ENCODE measurements at regions of chr15 and their contacts with region 1.

Region 1: GRCh38 chr15:65869127-65869953 is at the start of gene RAB11A:
- DNase-seq: peak; percentile 92 to 98 (median 93)
- ATAC-seq: peak; percentile 91 to 92
- H3K4me3 Mint-ChIP-seq: peak within 1 kb of the TSS; percentile 93 to 100 (median 99)
- H3K27ac Mint-ChIP-seq: peak within 1 kb of the TSS; percentile 93 to 100 (median 99)
- H3K4me1 Mint-ChIP-seq: peaks cover 26 to 38% (median 33%) of the 10 kb centered on the region in 4 donors
- H3K27me3 Mint-ChIP-seq: peaks cover 0 to 4% (median 0%) of the 10 kb centered on the region in 5 donors
- polyA plus RNA-seq, gene RAB11A: 186 to 204 (median 186) TPM

Region 2: DNA sequence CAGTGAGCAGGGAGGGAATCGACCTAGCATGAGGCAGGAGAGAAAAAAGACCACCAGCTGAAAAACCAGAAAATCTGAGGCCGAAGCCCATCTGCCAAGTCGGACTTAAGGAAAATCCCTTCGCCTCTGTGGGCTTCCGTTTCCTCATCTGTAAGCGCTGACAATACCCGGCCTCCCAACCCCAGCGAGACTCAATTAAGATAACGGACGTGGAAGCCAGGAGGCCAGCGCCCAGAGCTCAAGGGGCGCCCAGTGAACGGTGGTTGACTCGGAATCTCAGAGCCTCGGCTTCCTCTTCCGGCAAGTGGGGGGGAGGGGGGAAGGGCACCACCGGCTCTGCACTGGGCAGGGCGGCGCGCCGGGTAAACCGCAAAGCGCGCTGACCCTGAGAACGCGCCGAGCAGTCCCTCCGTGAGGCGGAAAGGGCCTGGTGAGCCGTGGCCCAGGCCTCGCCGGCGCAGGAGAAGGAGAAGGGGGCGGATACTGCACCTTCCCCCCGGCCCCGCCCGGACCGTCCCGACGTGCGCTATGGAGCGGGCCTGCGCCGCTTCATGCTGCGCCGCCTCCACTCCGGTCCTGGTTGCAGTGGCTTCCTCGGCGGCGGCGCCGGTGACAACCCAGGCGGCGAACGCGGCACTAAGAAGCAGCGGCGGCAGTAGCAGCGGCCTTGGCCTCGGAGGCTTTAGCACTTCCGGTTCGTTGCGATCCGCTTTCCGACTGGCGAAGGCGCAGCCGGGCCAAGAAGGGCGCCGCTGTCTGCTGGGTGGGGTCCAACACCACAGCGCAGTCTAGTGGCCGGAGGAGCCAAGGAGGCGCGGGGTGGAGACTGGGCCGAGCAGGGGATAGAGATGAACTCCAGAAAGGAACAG is 352.1 kb before region 1 on chr15 and contains the start of gene DPP8:
- POLR2A ChIA-PET with region 1: interaction called, 10 read pairs
- DNase-seq: peak; percentile 86 to 95 (median 93)
- ATAC-seq: peak; percentile 94
- H3K4me3 Mint-ChIP-seq: peak within 1 kb of the TSS; percentile 86 to 100 (median 95)
- H3K27ac Mint-ChIP-seq: peak within 1 kb of the TSS; percentile 79 to 99 (median 93)
- H3K4me1 Mint-ChIP-seq: peaks cover 9 to 53% (median 41%) of the 10 kb centered on the region in 4 donors
- H3K27me3 Mint-ChIP-seq: no peaks in the 10 kb centered on the region
- polyA plus RNA-seq, gene DPP8: 38.1 to 47.1 (median 41.8) TPM

Region 3: GRCh38 chr15:65610871-65611718 is 258.2 kb before region 1 on chr15 and contains the start of gene INTS14:
- POLR2A ChIA-PET with region 1: interaction called, 21 read pairs
- DNase-seq: peak; percentile 83 to 91 (median 86)
- ATAC-seq: peak; percentile 95
- H3K4me3 Mint-ChIP-seq: peak within 1 kb of the TSS; percentile 92 to 99 (median 97)
- H3K27ac Mint-ChIP-seq: peak within 1 kb of the TSS; percentile 94 to 100 (median 98)
- H3K4me1 Mint-ChIP-seq: peaks cover 15 to 49% (median 42%) of the 10 kb centered on the region in 4 donors
- H3K27me3 Mint-ChIP-seq: no peaks in the 10 kb centered on the region
- polyA plus RNA-seq, gene INTS14: 20.4 to 30.3 (median 24.0) TPM

Region 4: DNA sequence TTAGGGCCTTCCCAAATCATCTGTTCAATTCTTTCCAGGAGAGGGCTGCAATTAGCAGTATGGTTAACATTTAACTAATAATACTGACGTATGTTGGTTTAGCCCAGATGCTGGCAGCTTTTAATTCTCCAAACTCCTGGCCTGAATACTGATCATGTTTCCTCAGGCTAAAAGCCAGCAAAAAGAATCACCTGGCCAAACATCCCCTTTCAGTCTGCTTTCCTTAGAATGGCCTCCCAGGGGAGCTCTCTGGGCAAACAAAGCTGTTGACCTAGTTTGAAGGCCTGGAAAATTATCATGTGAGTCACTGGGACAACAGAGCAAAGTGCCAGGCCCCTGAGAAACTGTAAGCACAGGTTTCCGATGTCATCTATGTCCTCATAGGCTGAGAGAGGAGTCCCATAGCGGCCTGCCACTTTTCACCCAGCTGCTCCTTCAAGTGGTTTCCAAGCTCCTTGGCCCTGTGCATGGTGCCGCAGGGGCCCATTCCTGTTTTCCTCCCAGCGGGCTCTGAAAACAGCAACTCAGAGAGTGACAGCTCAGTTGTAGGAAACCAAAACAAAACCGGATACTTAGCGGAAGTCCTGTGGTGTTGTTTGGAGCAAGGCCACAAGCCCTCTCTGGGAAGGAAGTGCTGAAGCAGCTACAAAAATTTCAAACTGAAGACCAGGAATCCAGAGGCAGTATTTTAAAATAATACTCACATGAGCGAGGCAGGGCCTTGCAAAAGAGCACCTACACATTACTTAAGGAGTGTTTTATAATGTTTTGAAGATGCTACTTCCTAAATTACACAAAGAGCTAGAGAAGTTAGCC is 36.6 kb before region 1 on chr15:
- POLR2A ChIA-PET with region 1: interaction called, 21 read pairs
- DNase-seq: peak; percentile 27 to 73 (median 48)
- ATAC-seq: peak; percentile 57 to 60
- H3K4me3 Mint-ChIP-seq: peak overlapping the region; percentile 69 to 91 (median 81)
- H3K27ac Mint-ChIP-seq: peak overlapping the region; percentile 92 to 98 (median 96)
- H3K4me1 Mint-ChIP-seq: peaks cover 24 to 65% (median 51%) of the 10 kb centered on the region in 4 donors
- H3K27me3 Mint-ChIP-seq: no peaks in the 10 kb centered on the region

Region 5: DNA sequence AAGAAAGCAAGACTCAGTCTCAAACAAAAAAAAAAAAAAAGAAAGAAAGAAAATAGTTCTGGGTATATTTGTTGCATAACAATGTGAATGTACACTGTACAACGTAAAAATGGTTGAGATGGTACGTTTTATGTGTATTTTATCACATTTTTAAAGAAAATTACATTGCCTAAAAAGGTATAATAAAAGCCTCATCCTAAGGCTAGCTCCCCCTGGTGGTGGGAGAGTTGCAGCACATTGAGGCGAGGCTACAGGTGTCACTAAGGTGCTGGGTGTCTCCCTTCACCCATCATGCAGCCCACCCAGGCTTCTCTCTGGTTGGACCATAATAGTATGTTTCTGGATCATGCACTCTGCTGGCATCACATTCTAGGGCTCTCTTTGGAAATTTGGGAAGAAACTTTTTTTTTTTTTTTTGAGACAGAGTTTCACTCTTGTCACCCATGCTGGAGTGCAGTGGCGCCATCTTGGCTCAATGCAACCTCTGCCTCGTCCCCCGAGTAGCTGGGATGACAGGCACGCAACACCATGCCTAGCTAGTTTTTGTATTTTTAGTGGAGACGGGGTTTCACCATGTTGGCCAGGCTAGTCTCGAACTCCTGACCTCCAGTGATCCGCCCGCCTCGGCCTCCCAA is 12.4 kb before region 1 on chr15:
- POLR2A ChIA-PET with region 1: interaction called, 11 read pairs
- DNase-seq: peak; percentile 64 to 93 (median 80)
- ATAC-seq: peak; percentile 93 to 95
- H3K4me3 Mint-ChIP-seq: no peak overlapping the region
- H3K27ac Mint-ChIP-seq: no peak overlapping the region
- H3K4me1 Mint-ChIP-seq: peaks cover 3 to 14% (median 9%) of the 10 kb centered on the region in 4 donors
- H3K27me3 Mint-ChIP-seq: no peaks in the 10 kb centered on the region

Region 6: DNA sequence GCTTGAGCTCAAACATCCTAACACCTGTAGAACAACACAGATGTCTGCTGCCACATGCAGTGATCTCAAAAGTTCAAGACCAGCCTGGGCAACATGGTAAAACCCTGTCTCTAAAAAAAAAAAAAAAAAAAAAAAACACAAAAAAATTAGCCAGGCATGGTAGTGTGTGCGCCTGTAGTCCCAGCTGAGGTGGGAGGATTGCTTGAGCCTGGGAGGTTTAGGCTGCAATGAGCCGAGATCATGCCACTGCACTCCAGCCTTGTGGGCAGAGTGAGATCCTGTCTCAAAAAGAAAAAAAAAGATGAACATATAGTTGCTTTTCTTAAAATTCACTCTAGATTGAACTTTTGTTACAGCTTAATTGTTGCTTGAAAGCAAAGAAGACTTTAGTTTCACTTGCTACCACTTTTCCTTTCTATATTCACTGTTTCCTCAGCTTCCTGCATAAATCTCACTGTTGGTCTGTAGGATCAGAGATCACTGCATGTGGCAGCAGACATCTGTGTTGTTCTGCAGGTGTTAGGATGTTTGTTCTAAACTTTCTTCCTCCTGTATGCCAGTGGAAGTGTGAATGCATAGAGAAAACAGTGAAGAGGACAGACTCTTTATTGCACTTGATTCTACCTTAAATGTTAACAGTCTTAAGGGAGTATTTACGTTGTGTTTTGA is 12.6 kb after region 1 on chr15:
- POLR2A ChIA-PET with region 1: interaction called, 20 read pairs
- DNase-seq: peak in 2 of 10 donors; percentile 12 to 28
- ATAC-seq: peak; percentile 56 to 68
- H3K4me3 Mint-ChIP-seq: peak overlapping the region; percentile 28 to 82 (median 58)
- H3K27ac Mint-ChIP-seq: peak overlapping the region; percentile 41 to 91 (median 86)
- H3K4me1 Mint-ChIP-seq: peaks cover 15 to 58% (median 54%) of the 10 kb centered on the region in 4 donors
- H3K27me3 Mint-ChIP-seq: no peaks in the 10 kb centered on the region